Calu3 (cell line): ENCODE measurements at regions of chr5 and their contacts with region 1.

Region 1: GRCh38 chr5:176959051-176959450 is 47.5 kb downstream of the UIMC1 start:
- DNase-seq: no peak
- H3K4me3 Mint-ChIP-seq: no peak overlapping the region
- H3K27ac Mint-ChIP-seq: no peak overlapping the region
- H3K4me1 Mint-ChIP-seq: no peaks in the 10 kb centered on the region
- H3K27me3 Mint-ChIP-seq: no peaks in the 10 kb centered on the region
- CTCF ChIP-seq: peak; percentile 24

Region 2: DNA sequence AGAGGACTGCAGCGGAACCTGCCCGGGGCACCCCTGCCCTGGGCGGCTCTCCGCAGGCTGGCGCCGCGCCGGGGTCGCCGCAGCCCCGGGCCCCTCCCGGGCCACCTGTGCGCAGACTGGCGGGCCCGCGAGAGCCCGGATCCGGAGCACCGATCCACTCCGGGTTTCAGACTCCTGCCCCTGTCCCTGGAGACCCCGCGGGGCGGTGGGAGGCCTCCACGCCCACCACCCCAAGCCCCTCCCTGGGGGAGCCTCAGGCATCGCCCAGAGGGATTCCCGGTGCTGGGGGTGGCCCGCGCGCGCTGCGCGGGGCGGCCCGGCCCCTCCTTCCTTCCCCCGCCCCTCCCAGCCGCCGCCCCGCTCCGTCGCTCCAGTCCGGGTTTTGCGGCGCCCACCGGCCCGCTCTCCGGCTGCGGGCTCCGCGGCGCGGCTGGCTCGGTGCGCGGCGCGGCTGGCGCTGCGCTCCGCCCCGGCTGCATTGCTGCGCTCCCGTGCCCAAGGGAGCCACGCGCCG is 148.9 kb before region 1 on chr5 and contains the start of gene UNC5A:
- CTCF ChIA-PET with region 1: no interaction called
- intact Hi-C with region 1: loop called (anchors 2 kb)
- DNase-seq: peak; percentile 90
- H3K4me3 Mint-ChIP-seq: peak within 1 kb of the TSS; percentile 79
- H3K27ac Mint-ChIP-seq: peak within 1 kb of the TSS; percentile 43
- H3K4me1 Mint-ChIP-seq: peaks cover 42% of the 10 kb centered on the region
- H3K27me3 Mint-ChIP-seq: no peaks in the 10 kb centered on the region
- CTCF ChIP-seq: no peak
- total RNA-seq, gene UNC5A: 19.5 and 20.2 TPM in 2 replicates

Region 3: GRCh38 chr5:177336112-177336511 is 377.1 kb after region 1 on chr5:
- CTCF ChIA-PET with region 1: no interaction called
- intact Hi-C with region 1: no loop called
- DNase-seq: peak; percentile 63
- H3K4me3 Mint-ChIP-seq: no peak overlapping the region
- H3K27ac Mint-ChIP-seq: peak overlapping the region; percentile 19
- H3K4me1 Mint-ChIP-seq: peaks cover 31% of the 10 kb centered on the region
- H3K27me3 Mint-ChIP-seq: no peaks in the 10 kb centered on the region
- CTCF ChIP-seq: peak; percentile 61